ENCODE measurements at regions of chr1 and their contacts with region 1.

Region 1: DNA sequence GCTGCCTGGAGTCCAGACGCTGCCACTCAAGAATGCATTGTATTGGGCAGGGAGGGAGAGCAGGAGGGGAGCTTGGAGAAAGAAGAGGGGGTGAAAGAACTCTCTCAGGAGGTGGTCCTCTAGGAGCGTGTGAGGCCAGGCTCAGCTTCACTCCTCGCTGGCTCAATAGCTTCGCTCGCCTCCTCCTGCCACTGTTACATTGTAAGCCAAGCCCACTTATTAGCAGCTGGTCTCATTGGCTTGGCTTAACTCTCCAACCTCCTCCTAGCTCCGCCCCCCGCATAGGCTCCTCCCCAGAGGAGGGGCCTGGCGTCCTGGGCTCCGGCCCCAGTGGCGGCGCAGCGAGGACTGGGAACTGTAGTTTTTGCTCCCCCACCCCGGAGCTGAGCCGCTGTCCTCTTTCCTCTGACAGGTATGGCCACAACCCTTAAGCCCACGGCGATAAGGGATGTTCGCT is at the start of gene KCNN3:
- DNase-seq: peak; percentile 82
- ATAC-seq: peak; percentile 89
- H3K4me3 ChIP-seq: peak within 1 kb of the TSS; percentile 88
- H3K27ac ChIP-seq: peak within 1 kb of the TSS; percentile 46
- H3K4me1 ChIP-seq: peaks cover 58% of the 10 kb centered on the region
- H3K27me3 ChIP-seq: no peaks in the 10 kb centered on the region
- CTCF ChIP-seq: no peak
- EP300 ChIP-seq: no peak
- POLR2A ChIP-seq: peak; percentile 89
- RAD21 ChIP-seq: no peak
- polyA plus RNA-seq, gene KCNN3: 3.5 to 6.4 TPM

Region 2: GRCh38 chr1:154607609-154608396 is 262.3 kb before region 1 on chr1 and contains the start of gene ADAR:
- CTCF ChIA-PET with region 1: no interaction called
- POLR2A ChIA-PET with region 1: interaction called, 4 read pairs
- RAD21 ChIA-PET with region 1: interaction called, 3 read pairs
- SMC1A ChIA-PET with region 1: interaction called, 4 read pairs
- in situ Hi-C with region 1: no loop called
- intact Hi-C with region 1: loop called (anchors 5 kb)
- DNase-seq: peak; percentile 89
- ATAC-seq: peak; percentile 74
- H3K4me3 ChIP-seq: peak within 1 kb of the TSS; percentile 80
- H3K27ac ChIP-seq: peak within 1 kb of the TSS; percentile 100
- H3K4me1 ChIP-seq: peaks cover 47% of the 10 kb centered on the region
- H3K27me3 ChIP-seq: no peaks in the 10 kb centered on the region
- CTCF ChIP-seq: 0 out of 6 replicates have a peak, but pooled peaks of 2 of the 3 experiments have one; percentile 4 to 5
- EP300 ChIP-seq: 0 out of 4 replicates have a peak, but pooled peaks of 1 of the 2 experiments have one; percentile 16
- POLR2A ChIP-seq: peak; percentile 84
- RAD21 ChIP-seq: no peak
- polyA plus RNA-seq, gene ADAR: 55.5 to 105 TPM

Region 3: DNA sequence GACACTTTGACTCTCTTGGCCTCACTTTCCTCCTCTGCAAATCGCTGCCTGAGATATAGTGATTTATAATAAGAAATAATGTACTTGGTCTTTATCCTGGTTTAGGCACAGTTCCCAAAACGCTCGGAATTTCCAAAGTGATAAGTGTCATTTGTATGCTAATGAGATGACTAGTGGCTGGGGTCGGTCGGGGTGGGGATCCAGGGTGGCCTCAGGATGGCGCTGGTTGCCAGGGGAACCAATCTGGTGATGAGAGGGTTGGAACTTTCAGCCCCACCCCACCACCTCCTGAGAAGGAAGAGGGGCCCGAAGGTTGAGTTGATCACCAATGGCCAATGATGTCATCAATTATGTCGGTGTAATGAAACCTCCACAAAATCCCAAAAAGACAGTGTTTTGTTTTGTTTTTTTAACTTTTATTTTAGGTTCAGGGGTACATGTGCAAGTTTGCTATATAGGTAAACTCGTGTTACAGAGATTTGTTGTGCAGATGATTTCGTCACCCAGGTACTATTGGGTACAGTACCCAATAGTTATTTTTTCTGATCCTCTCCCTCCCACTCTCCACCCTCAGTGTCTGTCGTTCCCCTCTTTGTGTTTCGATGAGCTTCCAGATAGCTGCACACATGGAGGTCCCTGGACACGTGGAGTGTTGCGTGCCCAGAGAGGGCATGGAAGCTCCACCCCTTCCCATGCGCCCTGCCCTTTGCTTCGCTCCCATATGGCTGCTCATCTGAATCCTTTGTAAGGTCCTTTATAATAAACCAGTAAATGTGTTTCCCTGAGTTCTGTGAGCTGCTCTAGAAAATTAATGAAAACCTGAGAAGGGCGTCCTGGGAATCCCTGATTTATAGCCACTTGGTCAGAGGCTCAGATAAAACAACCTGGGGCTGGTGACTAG is 97.3 kb before region 1 on chr1:
- CTCF ChIA-PET with region 1: interaction called, 4 read pairs
- POLR2A ChIA-PET with region 1: interaction called, 6 read pairs
- RAD21 ChIA-PET with region 1: interaction called, 16 read pairs
- SMC1A ChIA-PET with region 1: interaction called, 4 read pairs
- in situ Hi-C with region 1: no loop called
- intact Hi-C with region 1: loop called (anchors 5 kb)
- DNase-seq: no peak
- ATAC-seq: peak; percentile 34; the same call in 1 of the 3 replicates
- H3K4me3 ChIP-seq: no peak overlapping the region
- H3K27ac ChIP-seq: peak overlapping the region; percentile 15; the same call in 1 of the 2 replicates
- H3K4me1 ChIP-seq: peaks cover 24% of the 10 kb centered on the region
- H3K27me3 ChIP-seq: no peaks in the 10 kb centered on the region
- CTCF ChIP-seq: peak in 2 of 3 experiments; percentile 10 to 24; a peak in 2 of 6 replicates
- EP300 ChIP-seq: no peak
- POLR2A ChIP-seq: no peak
- RAD21 ChIP-seq: no peak

Region 4: DNA sequence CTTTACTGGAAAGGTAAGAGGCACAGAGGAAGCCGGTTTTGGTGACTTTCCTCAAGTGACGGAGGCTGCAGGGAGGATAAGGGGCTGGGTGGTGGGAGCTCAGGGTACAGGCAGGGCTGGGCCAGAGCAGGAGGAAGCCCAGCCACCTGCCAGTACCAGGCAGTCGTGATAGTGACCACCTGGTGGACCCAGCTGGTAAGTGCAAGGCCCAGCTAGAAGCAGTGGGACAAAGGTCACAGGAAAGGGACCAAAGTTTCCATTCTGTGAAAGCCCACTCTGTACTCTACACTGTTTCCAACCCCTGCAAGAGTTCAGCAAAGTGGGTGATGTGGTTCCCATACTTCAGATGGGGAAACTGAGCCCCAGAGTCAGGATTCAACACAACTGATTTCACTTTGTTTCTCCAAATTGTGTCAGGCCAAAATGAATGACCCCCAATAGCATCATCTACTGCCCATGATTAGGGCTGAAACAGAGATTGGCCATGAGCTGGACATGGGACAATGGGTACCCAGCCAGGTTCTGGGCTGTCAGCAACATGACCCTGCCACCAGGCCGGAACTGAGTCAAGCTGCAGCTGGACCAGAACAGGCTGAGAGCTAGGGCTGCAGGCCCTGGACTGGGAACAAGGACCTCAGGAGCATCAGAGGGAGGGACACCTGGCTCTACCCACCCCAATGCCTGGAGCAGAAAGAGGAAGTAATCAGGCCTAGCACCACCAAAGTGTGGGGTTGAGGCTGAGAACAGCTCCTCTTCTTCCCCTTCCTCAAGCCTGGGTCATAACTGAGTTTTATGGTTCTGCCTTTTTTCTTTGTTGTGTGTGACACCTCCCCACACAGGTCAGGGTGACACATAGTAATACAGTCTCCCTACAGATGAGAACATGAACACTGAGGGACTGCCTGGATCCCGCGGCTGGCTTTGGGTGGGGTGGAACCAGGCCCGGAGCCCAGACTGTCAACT is 50.2 kb before region 1 on chr1:
- CTCF ChIA-PET with region 1: interaction called, 5 read pairs
- POLR2A ChIA-PET with region 1: interaction called, 9 read pairs
- RAD21 ChIA-PET with region 1: interaction called, 9 read pairs
- SMC1A ChIA-PET with region 1: interaction called, 21 read pairs
- in situ Hi-C with region 1: no loop called
- intact Hi-C with region 1: no loop called
- DNase-seq: no peak
- ATAC-seq: peak; percentile 83
- H3K4me3 ChIP-seq: no peak overlapping the region
- H3K27ac ChIP-seq: peak overlapping the region; percentile 10; the same call in 1 of the 2 replicates
- H3K4me1 ChIP-seq: peaks cover 35% of the 10 kb centered on the region
- H3K27me3 ChIP-seq: no peaks in the 10 kb centered on the region
- CTCF ChIP-seq: peak; percentile 11 to 59 (median 48)
- EP300 ChIP-seq: no peak
- POLR2A ChIP-seq: no peak
- RAD21 ChIP-seq: peak; percentile 47

Region 5: DNA sequence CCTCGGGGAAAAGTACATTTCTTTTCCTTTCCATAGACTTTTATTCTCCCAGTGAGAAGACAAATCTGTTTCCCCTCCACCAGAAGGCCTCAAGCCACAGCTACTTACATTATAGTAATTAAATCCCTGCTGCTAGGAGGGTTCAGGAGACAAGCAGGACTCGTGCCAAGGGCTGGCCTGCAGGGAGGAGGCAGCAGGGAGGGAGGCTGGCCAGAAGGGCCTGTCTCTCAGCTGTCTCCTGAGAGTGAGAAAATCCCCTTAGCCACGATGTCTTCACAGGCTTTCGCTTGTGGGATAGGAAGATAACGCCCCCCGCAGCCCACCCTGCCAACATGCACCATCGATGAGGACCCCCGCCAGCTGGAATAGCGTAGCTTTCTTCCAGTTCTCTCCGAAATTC is 14.1 kb before region 1 on chr1:
- CTCF ChIA-PET with region 1: interaction called, 34 read pairs
- POLR2A ChIA-PET with region 1: interaction called, 204 read pairs
- RAD21 ChIA-PET with region 1: interaction called, 254 read pairs
- SMC1A ChIA-PET with region 1: interaction called, 101 read pairs
- in situ Hi-C with region 1: no loop called
- intact Hi-C with region 1: no loop called
- DNase-seq: no peak
- ATAC-seq: no peak
- H3K4me3 ChIP-seq: peak overlapping the region; percentile 84; the same call in 1 of the 2 replicates
- H3K27ac ChIP-seq: peak overlapping the region; percentile 79; the same call in 1 of the 2 replicates
- H3K4me1 ChIP-seq: peaks cover 40% of the 10 kb centered on the region
- H3K27me3 ChIP-seq: no peaks in the 10 kb centered on the region
- CTCF ChIP-seq: no peak; a peak in 1 of 6 replicates
- EP300 ChIP-seq: no peak
- POLR2A ChIP-seq: no peak
- RAD21 ChIP-seq: 0 out of 2 replicates have a peak, but pooled peaks have one; percentile 17

Region 6: GRCh38 chr1:155063550-155064110 is 193.5 kb after region 1 on chr1 and contains the start of gene EFNA4:
- CTCF ChIA-PET with region 1: interaction called, 6 read pairs
- POLR2A ChIA-PET with region 1: no interaction called
- RAD21 ChIA-PET with region 1: no interaction called
- SMC1A ChIA-PET with region 1: no interaction called
- in situ Hi-C with region 1: no loop called
- intact Hi-C with region 1: loop called (anchors 5 kb)
- DNase-seq: no peak
- ATAC-seq: peak; percentile 90
- H3K4me3 ChIP-seq: peak within 1 kb of the TSS; percentile 95
- H3K27ac ChIP-seq: peak within 1 kb of the TSS; percentile 51
- H3K4me1 ChIP-seq: peaks cover 16% of the 10 kb centered on the region
- H3K27me3 ChIP-seq: no peaks in the 10 kb centered on the region
- CTCF ChIP-seq: no peak
- EP300 ChIP-seq: no peak
- POLR2A ChIP-seq: peak; percentile 85
- RAD21 ChIP-seq: no peak
- polyA plus RNA-seq, gene EFNA4: 0.52 to 1.3 TPM